ENCODE measurements at regions of chr11 and their contacts with region 1.

Region 1: GRCh38 chr11:108222686-108223448 is at the start of gene ATM:
- DNase-seq: peak; percentile 96 to 98
- H3K4me3 ChIP-seq: peak within 1 kb of the TSS; percentile 91 to 100 (median 96)
- H3K27ac ChIP-seq: peak within 1 kb of the TSS; percentile 97
- H3K4me1 ChIP-seq: peaks cover 4 to 11% (median 4%) of the 10 kb centered on the region in 4 experiments; a peak in 6 of 7 replicates
- H3K27me3 ChIP-seq: no peaks in the 10 kb centered on the region
- CTCF ChIP-seq: peak; percentile 48 to 77 (median 75)
- EP300 ChIP-seq: peak in 1 of 2 experiments; percentile 20; a peak in 1 of 3 replicates
- POLR2A ChIP-seq: peak; percentile 83 to 98
- RAD21 ChIP-seq: peak; percentile 35 to 40; a peak in 2 of 4 replicates
- total RNA-seq, gene ATM: 53.4 and 55.4 TPM in 2 replicates

Region 2: DNA sequence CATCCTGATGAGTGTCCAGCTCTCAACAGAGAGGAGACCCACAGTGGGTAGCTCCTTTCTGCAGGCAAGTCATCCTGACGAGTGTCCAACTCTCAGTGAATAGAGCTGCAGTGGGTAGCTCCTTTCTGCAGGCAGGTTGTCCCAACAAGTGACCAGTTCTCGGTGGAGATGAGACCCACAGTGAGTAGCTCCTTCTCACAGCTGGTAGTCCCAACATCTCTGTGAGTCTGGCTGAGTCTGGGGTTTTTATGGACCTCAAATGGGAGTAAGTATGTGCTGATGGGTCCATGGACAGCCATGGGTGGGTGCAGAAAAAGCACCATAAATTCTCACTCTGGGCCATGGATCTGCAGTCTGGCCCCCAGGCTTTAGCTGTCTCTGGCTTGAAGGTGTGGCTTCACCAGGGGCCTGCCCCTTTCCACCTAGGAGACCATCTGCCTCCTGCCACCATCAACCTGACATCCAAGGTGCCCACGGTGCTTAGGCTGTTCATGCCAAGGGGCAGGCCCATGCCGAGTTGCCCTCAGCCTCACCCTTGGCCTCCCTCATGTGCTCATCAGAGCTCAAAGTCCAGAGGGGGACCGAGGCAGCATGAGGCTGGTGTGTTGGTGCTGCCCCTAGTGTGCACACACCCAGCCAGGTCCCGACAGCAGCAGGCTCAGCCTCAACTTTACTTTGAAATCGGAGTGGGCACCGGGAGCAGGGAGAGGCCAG is 15.7 kb before region 1 on chr11:
- CTCF ChIA-PET with region 1: interaction called, 5 read pairs
- POLR2A ChIA-PET with region 1: interaction called, 17 read pairs
- DNase-seq: no peak
- H3K4me3 ChIP-seq: no peak overlapping the region
- H3K27ac ChIP-seq: no peak overlapping the region
- H3K4me1 ChIP-seq: no peaks in the 10 kb centered on the region; a peak in 1 of 7 replicates
- H3K27me3 ChIP-seq: no peaks in the 10 kb centered on the region
- CTCF ChIP-seq: no peak
- EP300 ChIP-seq: no peak
- POLR2A ChIP-seq: no peak
- RAD21 ChIP-seq: no peak

Region 3: GRCh38 chr11:108237058-108237481 is 14.2 kb after region 1 on chr11:
- CTCF ChIA-PET with region 1: interaction called, 11 read pairs
- POLR2A ChIA-PET with region 1: interaction called, 5 read pairs
- DNase-seq: no peak
- H3K4me3 ChIP-seq: no peak overlapping the region
- H3K27ac ChIP-seq: no peak overlapping the region
- H3K4me1 ChIP-seq: no peaks in the 10 kb centered on the region
- H3K27me3 ChIP-seq: no peaks in the 10 kb centered on the region
- CTCF ChIP-seq: no peak
- EP300 ChIP-seq: no peak
- POLR2A ChIP-seq: no peak
- RAD21 ChIP-seq: no peak

Measured in H1 (cell line).